GM13977 (cell line): ENCODE measurements at regions of chr3 and their contacts with region 1.

Region 1: DNA sequence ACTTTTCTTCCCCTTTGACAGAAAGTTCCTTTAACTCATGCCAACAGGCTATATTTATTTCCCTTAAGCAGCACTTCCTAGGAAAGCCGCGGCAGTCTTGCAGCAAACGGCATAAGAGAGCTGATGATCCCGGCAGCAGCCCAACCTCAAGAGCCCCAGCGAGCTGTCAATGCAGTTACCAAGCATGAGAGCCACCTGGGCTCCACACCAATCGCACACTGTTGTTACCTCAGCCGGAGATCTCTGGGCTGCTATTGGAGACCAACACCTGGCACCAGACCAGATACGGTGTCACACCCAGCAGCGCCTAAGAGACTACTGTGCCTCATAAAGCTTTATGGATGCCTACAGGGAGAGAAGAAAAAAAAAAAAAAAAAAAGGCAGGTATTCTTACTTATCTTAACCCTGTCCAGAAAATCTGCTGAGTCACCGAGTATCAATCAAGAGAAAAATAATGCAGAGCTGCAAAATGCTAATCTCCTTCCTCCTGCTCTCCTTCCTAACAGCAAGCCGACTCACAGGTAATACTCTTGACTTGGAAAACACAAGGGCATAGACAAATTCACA is 11.7 kb downstream of the ABCC5 start:
- DNase-seq: peak; percentile 69
- CTCF ChIP-seq: no peak

Region 2: DNA sequence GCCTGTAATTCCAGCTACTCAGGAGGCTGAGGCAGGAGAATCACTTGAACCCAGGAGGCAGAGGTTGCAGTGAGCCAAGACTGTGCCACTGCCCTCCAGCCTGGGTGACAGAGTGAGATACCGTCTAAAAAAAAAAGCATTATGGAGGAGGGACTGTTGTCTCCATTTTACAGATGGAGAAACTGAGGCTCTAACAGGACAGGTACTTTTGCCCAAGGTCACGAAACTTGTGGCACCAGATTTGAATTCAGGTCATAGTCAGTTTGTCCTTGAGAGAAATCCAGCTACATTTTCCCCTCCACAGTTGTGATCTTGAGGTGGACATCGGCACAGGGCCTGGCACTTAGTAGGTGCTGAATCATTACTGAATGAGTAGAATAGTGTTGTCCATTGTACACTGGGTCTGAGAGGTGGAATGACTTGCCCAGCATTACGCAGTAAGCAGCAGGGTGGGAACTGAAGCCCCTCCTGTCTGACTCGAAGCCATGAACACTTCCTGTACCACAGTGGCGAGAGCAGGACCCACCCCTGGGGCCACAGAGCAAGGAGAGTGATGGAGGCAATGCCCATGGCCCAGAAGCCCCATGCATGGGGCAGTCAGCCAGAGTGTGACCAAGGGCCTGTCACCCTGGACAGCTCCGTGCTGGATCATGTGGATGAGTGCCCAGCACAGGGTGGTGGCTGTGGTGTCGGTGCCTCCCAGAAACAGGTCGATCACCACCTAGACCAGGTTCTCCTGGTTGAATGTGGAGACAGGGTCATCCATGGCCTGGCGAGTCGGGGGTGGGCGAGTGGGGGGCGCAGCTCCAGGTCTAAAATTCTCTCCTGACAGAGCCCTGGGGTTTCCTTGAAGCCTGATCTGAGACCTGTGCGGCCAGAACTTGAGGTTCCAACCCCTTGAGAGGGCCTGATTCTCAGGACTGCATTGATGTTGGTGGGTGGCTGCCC is 100.9 kb before region 1 on chr3:
- in situ Hi-C with region 1: loop called (anchors 10 kb)
- DNase-seq: no peak
- CTCF ChIP-seq: no peak